Heart left ventricle (tissue), 16 donors: ENCODE measurements at regions of chr1 and their contacts with region 1.

Region 1: DNA sequence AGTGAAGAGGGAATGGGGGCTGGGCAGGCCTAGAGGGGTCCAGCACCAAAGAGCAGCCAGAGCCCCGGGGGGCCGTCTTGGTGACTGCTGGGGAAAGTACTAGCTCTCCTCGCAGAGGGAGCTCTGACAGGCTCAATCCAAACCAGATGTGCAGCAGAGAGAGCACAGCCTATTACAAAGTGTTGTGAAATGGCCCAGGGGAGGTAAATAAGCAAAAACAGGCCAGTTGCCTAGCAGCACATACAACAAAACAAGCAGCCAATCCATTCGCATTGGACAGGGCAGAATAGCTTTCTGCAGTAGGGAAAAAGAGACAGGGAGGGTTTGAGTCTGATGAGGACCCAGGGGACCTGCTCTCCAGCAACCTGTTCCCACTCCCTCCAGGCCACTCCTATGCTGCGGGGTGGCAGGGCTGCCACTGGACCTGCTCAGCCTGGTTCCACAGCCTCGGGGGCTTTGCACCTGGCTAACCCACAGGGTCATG is 239.6 kb upstream of the FGGY start:
- DNase-seq: peak; percentile 81 to 91 (median 84)
- ATAC-seq: peak; percentile 89 to 93 (median 91)
- H3K4me3 ChIP-seq: no peak overlapping the region
- H3K27ac ChIP-seq: peak overlapping the region; percentile 35 to 77 (median 58)
- H3K4me1 ChIP-seq: peaks cover 0 to 42% (median 26%) of the 10 kb centered on the region in 12 donors
- H3K27me3 ChIP-seq: no peaks in the 10 kb centered on the region
- CTCF ChIP-seq: peak in 3 of 12 donors; percentile 12 to 37 (median 22)
- POLR2A ChIP-seq: peak in 1 of 2 donors; percentile 57

Region 2: DNA sequence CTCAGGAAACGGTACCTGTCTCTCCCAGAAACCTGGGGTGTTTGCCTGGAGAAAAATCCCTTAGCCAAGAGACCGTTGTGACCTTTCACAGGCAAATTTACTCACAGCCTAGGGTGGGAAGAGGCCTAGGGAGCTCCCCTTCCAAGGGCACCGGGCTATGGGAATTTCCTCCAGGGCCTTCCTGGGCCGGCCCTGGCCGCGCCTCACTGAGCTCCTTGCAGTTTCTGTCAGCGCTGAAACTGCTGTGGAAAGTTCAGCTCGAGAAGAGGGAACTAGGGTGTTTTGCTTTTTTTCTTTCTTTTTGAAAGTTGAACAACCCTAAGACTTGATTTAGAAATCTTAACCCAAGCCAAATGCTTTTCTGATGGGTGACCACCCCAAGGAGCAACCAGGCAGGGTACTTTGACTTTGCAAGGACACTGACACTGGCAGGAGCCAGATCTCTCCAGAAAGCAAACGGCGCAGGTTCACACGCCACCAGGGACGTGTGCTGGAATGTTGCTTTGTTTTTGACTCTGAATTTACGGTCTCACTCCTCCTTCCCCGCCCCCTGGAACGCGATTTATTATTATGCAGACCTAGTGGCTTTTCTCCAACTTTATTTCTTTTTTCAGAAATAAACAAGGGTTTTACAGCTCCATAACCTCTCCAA is 43.9 kb before region 1 on chr1:
- intact Hi-C with region 1: loop called in 2 of 10 experiments (anchors 5 kb)
- DNase-seq: peak; percentile 33 to 65 (median 46)
- ATAC-seq: peak; percentile 40 to 77 (median 69)
- H3K4me3 ChIP-seq: peak overlapping the region in 5 of 12 donors; percentile 4 to 34 (median 23)
- H3K27ac ChIP-seq: peak overlapping the region; percentile 68 to 88 (median 80)
- H3K4me1 ChIP-seq: peaks cover 6 to 51% (median 24%) of the 10 kb centered on the region in 12 donors
- H3K27me3 ChIP-seq: no peaks in the 10 kb centered on the region
- CTCF ChIP-seq: no peak
- POLR2A ChIP-seq: no peak